WTC11 (cell line): ENCODE measurements at regions of chr2 and their contacts with region 1.

Region 1: GRCh38 chr2:112941753-112942658 is 31.0 kb downstream of the IL37 start:
- DNase-seq: peak; percentile 89
- ATAC-seq: peak; percentile 100
- H3K4me3 Mint-ChIP-seq: no peak overlapping the region
- H3K27ac Mint-ChIP-seq: no peak overlapping the region
- H3K4me1 Mint-ChIP-seq: no peaks in the 10 kb centered on the region
- H3K27me3 Mint-ChIP-seq: peaks cover 44% of the 10 kb centered on the region
- CTCF ChIP-seq: peak; percentile 71

Region 2: GRCh38 chr2:112726497-112727190 is 215.4 kb before region 1 on chr2:
- CTCF ChIA-PET with region 1: interaction called, 64 read pairs
- POLR2A ChIA-PET with region 1: no interaction called
- DNase-seq: peak; percentile 95
- ATAC-seq: peak; percentile 93
- H3K4me3 Mint-ChIP-seq: no peak overlapping the region
- H3K27ac Mint-ChIP-seq: no peak overlapping the region
- H3K4me1 Mint-ChIP-seq: peaks cover 8% of the 10 kb centered on the region; the same call in 1 of the 2 replicates
- H3K27me3 Mint-ChIP-seq: no peaks in the 10 kb centered on the region
- CTCF ChIP-seq: peak; percentile 87

Region 3: DNA sequence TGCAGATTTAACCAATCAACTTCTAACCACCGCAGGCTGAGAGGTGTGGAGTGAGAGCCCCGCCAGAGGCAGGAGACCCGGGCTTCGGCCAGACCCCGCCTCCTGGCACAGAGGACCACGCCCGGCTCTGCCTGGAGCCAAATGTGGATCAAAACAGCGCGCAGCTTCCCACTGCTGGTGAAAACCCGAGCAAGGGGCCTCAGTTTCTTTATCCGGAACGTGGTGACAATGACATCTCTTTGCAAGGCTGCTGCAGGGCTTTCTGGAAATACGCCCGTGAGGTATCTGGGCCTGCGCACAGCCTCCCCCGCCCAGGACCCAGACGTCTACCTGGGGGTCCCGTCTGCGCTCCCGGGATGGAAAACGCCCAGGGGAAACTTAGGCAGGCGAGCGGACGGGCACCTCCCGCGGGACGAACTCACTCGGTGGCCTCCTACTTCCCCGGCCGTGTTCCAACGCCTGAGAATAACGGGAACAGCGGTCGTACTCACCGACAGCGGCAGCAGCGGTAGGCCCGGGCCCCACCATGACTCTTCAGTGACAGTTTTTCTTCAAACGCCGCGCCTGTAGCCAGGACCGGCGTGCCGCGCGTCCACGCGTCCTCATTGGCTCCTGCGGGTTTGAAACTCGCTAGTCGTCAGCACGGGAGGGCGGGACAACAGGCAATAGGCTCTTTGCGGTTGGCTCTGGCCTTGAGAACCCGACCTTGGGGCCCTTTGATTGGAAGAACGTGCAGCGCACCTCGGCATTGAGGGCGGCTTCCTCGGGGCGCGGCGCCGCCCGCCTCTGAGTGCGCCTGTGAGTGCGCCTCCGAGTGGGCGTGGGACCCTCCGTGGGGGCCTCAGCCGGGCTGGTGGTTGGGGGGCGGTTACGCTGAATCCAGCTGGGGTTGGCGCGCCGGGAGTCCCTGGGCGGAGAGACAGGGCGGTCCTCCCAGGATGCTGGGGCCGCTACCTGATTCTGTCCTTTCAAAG is 177.6 kb before region 1 on chr2 and contains the start of gene CKAP2L:
- CTCF ChIA-PET with region 1: interaction called, 21 read pairs
- POLR2A ChIA-PET with region 1: no interaction called
- DNase-seq: peak; percentile 95
- ATAC-seq: peak; percentile 97
- H3K4me3 Mint-ChIP-seq: peak within 1 kb of the TSS; percentile 97
- H3K27ac Mint-ChIP-seq: peak within 1 kb of the TSS; percentile 82
- H3K4me1 Mint-ChIP-seq: peaks cover 23% of the 10 kb centered on the region
- H3K27me3 Mint-ChIP-seq: no peaks in the 10 kb centered on the region
- CTCF ChIP-seq: no peak
- total RNA-seq, gene CKAP2L: 17.7 to 25.6 TPM (median 17.9 TPM) in 3 replicates

Region 4: GRCh38 chr2:112794131-112794733 is 147.8 kb before region 1 on chr2:
- CTCF ChIA-PET with region 1: no interaction called
- POLR2A ChIA-PET with region 1: no interaction called
- DNase-seq: no peak
- ATAC-seq: no peak
- H3K4me3 Mint-ChIP-seq: no peak overlapping the region
- H3K27ac Mint-ChIP-seq: peak overlapping the region; percentile 5; the same call in 1 of the 2 replicates
- H3K4me1 Mint-ChIP-seq: peaks cover 56% of the 10 kb centered on the region
- H3K27me3 Mint-ChIP-seq: no peaks in the 10 kb centered on the region; the same call in 1 of the 2 replicates
- CTCF ChIP-seq: no peak

Region 5: GRCh38 chr2:112884869-112885505 is 57.0 kb before region 1 on chr2:
- CTCF ChIA-PET with region 1: interaction called, 69 read pairs
- POLR2A ChIA-PET with region 1: no interaction called
- DNase-seq: peak; percentile 89
- ATAC-seq: peak; percentile 98
- H3K4me3 Mint-ChIP-seq: no peak overlapping the region
- H3K27ac Mint-ChIP-seq: no peak overlapping the region
- H3K4me1 Mint-ChIP-seq: peaks cover 9% of the 10 kb centered on the region
- H3K27me3 Mint-ChIP-seq: no peaks in the 10 kb centered on the region; the same call in none of the 2 replicates
- CTCF ChIP-seq: peak; percentile 89

Region 6: DNA sequence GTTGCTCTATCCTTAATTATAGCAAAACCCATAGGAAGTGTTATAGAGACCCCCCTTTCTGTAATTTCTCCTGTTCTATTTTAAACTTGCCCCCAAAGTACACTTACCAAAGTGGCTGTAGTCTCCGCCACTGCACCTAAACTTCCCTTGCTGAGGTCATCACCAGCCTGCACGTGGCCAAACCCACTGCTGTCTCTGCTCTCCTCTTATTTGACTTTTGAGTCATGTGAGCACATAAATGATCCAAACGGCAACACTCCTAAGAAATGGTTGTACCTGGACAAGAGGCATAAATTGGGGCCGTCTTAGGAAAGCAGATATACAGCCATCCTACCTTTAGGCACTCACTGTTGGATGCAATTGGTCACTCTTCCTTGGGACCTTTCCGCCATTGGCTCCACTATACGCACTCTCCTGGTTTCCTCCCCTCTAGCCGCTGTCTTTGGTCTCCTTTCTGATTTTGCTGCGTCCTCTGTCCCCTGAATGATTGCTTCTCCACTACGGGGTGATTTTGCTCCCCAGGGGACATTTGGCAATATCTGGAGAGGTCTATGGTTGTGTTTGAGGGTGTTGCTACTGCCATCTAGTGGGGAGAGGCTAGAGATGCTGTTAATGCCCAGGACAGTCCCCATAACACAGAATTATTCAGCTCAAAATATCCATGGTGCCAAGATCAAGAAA is 16.6 kb after region 1 on chr2:
- CTCF ChIA-PET with region 1: interaction called, 141 read pairs
- POLR2A ChIA-PET with region 1: no interaction called
- DNase-seq: peak; percentile 21
- ATAC-seq: peak; percentile 83
- H3K4me3 Mint-ChIP-seq: no peak overlapping the region
- H3K27ac Mint-ChIP-seq: no peak overlapping the region
- H3K4me1 Mint-ChIP-seq: peaks cover 8% of the 10 kb centered on the region; the same call in 1 of the 2 replicates
- H3K27me3 Mint-ChIP-seq: peaks cover 8% of the 10 kb centered on the region
- CTCF ChIP-seq: peak; percentile 73